Activated T-helper 2 cell treated with anti-CD3 and anti-CD28 coated beads, Interferon-gamma antibody, Interleukin-2, Interleukin-4, amounts not matched to agents 10 μg/mL and 5 μg/mL and 100 μg/mL, durations not matched to agents 14 hours and 24 hours and 36 hours (primary cell): ENCODE measurements at regions of chr15 and their contacts with region 1.

Region 1: GRCh38 chr15:50354838-50355618 is at the start of gene GABPB1:
- DNase-seq: peak; percentile 89
- H3K4me3 Mint-ChIP-seq: peak within 1 kb of the TSS; percentile 98
- H3K27ac Mint-ChIP-seq: peak within 1 kb of the TSS; percentile 100
- H3K4me1 Mint-ChIP-seq: peaks cover 37% of the 10 kb centered on the region
- H3K27me3 Mint-ChIP-seq: no peaks in the 10 kb centered on the region
- total RNA-seq, gene GABPB1: 69.3 and 69.5 TPM in 2 replicates

Region 2: DNA sequence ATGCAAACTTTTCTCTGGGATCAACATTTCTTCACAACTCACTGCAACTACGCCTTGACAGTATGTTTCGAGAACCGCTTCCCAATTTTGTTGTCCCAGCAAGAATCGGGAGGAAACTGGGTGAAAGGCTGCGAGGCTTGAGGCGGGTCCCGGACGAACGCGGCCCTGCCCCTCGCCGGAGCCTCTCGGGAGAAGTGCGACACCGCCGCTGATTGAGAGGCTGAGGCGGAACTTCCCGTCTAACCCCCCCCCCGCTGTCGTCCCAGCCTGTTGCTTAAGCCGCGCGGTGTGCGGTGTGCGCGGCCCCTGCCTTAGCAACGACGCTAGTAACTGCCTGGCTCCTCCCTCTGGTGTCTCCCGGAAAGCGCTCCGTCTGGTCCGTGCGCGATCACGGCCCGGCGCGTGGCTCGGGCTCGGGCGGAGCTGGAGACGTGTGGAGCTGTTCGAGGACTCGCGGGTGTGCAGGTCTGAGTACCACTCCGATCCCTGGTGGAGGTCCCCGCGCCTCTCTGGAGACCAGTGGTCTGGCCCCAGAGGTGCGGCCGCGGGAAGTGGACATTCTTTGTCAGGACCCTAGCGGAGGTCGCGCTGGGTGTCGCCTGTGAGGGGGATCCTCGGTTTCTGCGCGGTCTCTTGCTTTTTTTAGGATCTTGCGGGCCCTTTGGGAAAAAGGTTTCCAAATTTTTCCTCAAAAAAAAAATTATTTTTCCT is 734.2 kb before region 1 on chr15 and contains the starts of genes DTWD1 and FAM227B:
- intact Hi-C with region 1: loop called (anchors 2 kb)
- DNase-seq: peak; percentile 93
- H3K4me3 Mint-ChIP-seq: peak within 1 kb of the TSS; percentile 90
- H3K27ac Mint-ChIP-seq: peak within 1 kb of the TSS; percentile 91
- H3K4me1 Mint-ChIP-seq: peaks cover 39% of the 10 kb centered on the region
- H3K27me3 Mint-ChIP-seq: no peaks in the 10 kb centered on the region
- total RNA-seq, gene DTWD1: 22.0 and 24.0 TPM in 2 replicates
- total RNA-seq, gene FAM227B: 2.7 and 3.1 TPM in 2 replicates

Region 3: GRCh38 chr15:50107157-50107556 is 247.9 kb before region 1 on chr15:
- intact Hi-C with region 1: no loop called
- DNase-seq: no peak
- H3K4me3 Mint-ChIP-seq: peak overlapping the region; percentile 35
- H3K27ac Mint-ChIP-seq: peak overlapping the region; percentile 94
- H3K4me1 Mint-ChIP-seq: peaks cover 79% of the 10 kb centered on the region
- H3K27me3 Mint-ChIP-seq: no peaks in the 10 kb centered on the region

Region 4: DNA sequence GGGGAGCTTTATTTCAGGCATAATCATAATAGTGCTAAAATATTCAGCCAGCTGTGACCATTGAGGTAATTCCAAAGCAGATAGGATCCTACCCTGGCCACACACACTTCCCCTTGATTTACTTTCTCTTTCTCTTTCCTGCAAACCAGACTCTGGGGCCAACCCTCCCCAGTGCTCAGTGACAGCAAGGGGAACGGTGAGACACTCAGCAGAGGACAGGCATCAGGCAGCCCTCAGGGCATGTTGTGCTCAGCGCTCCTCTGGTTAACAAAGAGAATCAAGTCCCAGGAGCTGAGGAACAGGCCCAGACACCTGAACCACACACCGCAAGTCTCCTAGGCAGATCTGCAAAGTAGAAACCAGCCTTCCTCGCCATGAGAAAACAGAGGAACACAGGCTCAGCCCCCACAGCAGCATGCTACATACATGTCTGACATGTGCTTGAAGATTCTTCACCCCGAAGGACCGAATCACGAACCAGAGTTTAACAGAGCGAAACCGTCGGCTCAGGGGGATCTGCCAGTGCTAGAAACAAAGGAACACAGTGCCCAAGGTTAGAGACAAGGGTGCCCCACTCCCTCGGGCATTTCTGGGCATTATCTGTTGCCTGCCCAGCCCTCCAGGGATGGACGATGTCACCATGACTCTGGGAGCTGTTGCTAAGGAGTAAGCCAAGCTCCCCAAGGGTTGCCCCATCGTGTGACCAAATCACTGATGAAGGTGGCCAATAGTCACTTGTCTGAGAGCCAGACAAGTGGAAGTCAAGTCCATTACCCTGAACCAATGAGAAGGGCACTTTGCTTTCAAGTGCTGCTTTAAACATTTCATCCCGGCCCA is 107.0 kb before region 1 on chr15:
- intact Hi-C with region 1: loop called (anchors 2 kb)
- DNase-seq: peak; percentile 62
- H3K4me3 Mint-ChIP-seq: peak overlapping the region; percentile 82
- H3K27ac Mint-ChIP-seq: peak overlapping the region; percentile 99
- H3K4me1 Mint-ChIP-seq: peaks cover 68% of the 10 kb centered on the region
- H3K27me3 Mint-ChIP-seq: no peaks in the 10 kb centered on the region

Region 5: GRCh38 chr15:50424066-50424890 is 69.2 kb after region 1 on chr15 and contains the start of gene USP8:
- intact Hi-C with region 1: loop called (anchors 1 kb)
- DNase-seq: peak; percentile 93
- H3K4me3 Mint-ChIP-seq: peak within 1 kb of the TSS; percentile 95
- H3K27ac Mint-ChIP-seq: peak within 1 kb of the TSS; percentile 85
- H3K4me1 Mint-ChIP-seq: peaks cover 16% of the 10 kb centered on the region
- H3K27me3 Mint-ChIP-seq: no peaks in the 10 kb centered on the region
- total RNA-seq, gene USP8: 57.2 and 57.4 TPM in 2 replicates

Region 6: GRCh38 chr15:50627351-50628055 is 272.5 kb after region 1 on chr15:
- intact Hi-C with region 1: loop called (anchors 10 kb)
- DNase-seq: no peak
- H3K4me3 Mint-ChIP-seq: no peak overlapping the region
- H3K27ac Mint-ChIP-seq: peak overlapping the region; percentile 42
- H3K4me1 Mint-ChIP-seq: peaks cover 18% of the 10 kb centered on the region
- H3K27me3 Mint-ChIP-seq: no peaks in the 10 kb centered on the region

Region 7: GRCh38 chr15:51243759-51244158 is 888.7 kb after region 1 on chr15:
- intact Hi-C with region 1: loop called (anchors 10 kb)
- DNase-seq: no peak
- H3K4me3 Mint-ChIP-seq: no peak overlapping the region
- H3K27ac Mint-ChIP-seq: peak overlapping the region; percentile 78
- H3K4me1 Mint-ChIP-seq: peaks cover 41% of the 10 kb centered on the region
- H3K27me3 Mint-ChIP-seq: peaks cover 10% of the 10 kb centered on the region